Left ventricle myocardium inferior (tissue), 1 donor: ENCODE measurements at regions of chr15 and their contacts with region 1.

Region 1: GRCh38 chr15:63402498-63403253 is 21.0 kb upstream of the CA12 start:
- DNase-seq: no peak
- H3K4me3 ChIP-seq: no peak overlapping the region
- H3K27ac ChIP-seq: no peak overlapping the region
- H3K4me1 ChIP-seq: no peaks in the 10 kb centered on the region
- H3K27me3 ChIP-seq: no peaks in the 10 kb centered on the region
- CTCF ChIP-seq: peak; percentile 77

Region 2: GRCh38 chr15:63238796-63239195 is 163.9 kb before region 1 on chr15:
- intact Hi-C with region 1: no loop called
- DNase-seq: no peak
- H3K4me3 ChIP-seq: no peak overlapping the region
- H3K27ac ChIP-seq: peak overlapping the region; percentile 42
- H3K4me1 ChIP-seq: peaks cover 54% of the 10 kb centered on the region
- H3K27me3 ChIP-seq: no peaks in the 10 kb centered on the region
- CTCF ChIP-seq: no peak

Region 3: GRCh38 chr15:63288778-63289378 is 113.8 kb before region 1 on chr15:
- intact Hi-C with region 1: loop called (anchors 2 kb)
- DNase-seq: no peak
- H3K4me3 ChIP-seq: no peak overlapping the region
- H3K27ac ChIP-seq: no peak overlapping the region
- H3K4me1 ChIP-seq: peaks cover 10% of the 10 kb centered on the region
- H3K27me3 ChIP-seq: no peaks in the 10 kb centered on the region
- CTCF ChIP-seq: peak; percentile 80